ENCODE measurements at regions of chrX and their contacts with region 1.

Region 1: DNA sequence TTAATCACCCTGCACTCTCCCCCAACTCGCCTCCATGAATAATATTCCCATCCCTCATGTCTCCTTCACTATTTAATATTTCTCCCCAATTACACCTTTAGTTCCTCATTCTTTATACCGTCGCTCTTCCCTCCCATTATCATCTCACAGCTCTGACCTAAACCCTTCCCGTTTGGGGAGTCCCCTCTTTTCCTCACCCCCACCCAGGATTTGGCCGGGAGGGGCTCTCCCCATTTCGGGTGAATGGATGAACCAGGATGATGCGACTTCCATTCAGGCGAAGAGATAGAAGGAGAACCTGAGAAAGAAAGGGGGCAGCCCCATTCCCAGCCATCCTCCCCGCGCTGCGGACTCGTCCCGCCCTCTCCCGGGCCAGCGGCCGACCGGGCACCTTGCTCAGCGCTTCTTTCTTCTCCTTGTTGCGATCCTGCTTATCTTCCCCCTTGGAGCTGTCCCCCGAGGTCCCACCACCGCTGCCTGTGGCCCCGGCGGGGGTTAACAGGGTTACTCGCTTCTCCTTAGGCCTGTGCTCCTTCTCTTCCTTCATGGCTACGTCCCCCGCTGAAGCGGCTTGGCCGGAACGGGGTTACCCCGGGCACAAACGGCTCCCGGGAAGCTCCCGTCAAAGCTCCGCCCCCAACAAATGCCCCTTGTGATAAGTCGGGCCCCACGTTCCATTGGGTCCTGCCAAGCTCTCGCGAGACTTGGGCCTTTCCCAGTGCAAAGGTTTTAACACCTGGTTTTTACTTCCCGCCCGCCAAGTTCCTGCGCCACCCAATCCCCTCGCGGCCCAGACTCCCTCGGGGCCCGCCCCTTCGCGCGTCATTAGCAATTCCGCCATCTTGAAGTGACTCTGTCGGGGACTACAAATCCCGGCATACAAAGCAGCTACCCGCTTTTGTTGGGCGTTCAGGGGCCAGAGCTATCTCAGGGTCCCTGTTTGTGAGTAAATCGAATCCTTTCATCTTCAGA is at the start of gene UPF3B:
- DNase-seq: peak; percentile 92 to 98
- H3K4me3 ChIP-seq: peak within 1 kb of the TSS; percentile 57 to 70
- H3K27ac ChIP-seq: peak within 1 kb of the TSS; percentile 81 to 85
- H3K4me1 ChIP-seq: no peaks in the 10 kb centered on the region
- H3K27me3 ChIP-seq: no peaks in the 10 kb centered on the region
- CTCF ChIP-seq: no peak
- total RNA-seq, gene UPF3B: not detected

Region 2: GRCh38 chrX:118345401-118346257 is 1507.0 kb before region 1 on chrX and contains the start of gene WDR44:
- intact Hi-C with region 1: loop called (anchors 10 kb)
- DNase-seq: peak; percentile 77 to 96
- H3K4me3 ChIP-seq: peak within 1 kb of the TSS; percentile 69 to 89
- H3K27ac ChIP-seq: peak within 1 kb of the TSS; percentile 94 to 95
- H3K4me1 ChIP-seq: peaks cover 0 to 3% of the 10 kb centered on the region in 2 donors
- H3K27me3 ChIP-seq: no peaks in the 10 kb centered on the region
- CTCF ChIP-seq: no peak
- total RNA-seq, gene WDR44: 5.9 TPM

Region 3: DNA sequence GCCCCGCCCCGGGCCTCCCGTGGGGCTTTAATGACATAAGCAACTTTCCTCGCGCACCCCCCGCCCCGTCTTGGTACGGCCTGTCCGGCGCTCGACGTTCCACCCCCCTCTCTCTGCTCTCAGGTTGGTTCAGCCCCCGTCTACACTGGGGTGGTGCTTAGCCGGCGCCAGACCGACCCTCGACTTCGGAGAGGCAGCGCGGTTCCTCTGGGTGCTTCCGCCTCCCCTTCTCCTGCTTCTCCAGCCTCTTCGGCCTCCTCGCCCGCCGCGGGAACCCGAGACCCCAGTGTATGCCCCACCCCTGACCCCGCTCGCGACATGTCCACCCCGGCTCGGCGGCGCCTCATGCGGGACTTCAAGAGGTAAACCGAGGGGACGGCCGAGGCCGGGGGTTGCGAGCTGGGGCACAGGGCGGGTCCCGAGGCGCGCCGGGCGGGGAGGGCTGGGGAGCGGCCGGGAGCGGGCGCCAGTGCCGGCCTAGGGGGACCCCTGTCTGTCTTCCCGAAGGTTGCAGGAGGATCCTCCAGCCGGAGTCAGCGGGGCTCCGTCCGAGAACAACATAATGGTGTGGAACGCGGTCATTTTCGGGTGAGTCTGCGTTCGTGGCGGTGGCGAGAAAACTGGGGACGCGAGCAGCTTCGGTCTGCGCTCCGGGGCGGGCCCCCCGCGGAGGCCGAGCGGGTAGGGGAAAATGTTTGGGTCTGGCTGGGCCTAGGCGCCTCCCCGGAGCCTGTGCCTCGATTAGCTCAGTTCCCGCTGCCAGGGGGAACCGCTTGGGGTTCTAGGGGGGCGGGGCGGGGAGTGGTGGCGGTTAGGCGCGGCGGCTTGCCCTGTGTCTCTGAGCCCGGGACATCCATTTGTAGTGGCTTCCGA is 278.0 kb before region 1 on chrX and contains the start of gene UBE2A:
- intact Hi-C with region 1: loop called (anchors 5 kb)
- DNase-seq: peak; percentile 45 to 93
- H3K4me3 ChIP-seq: peak within 1 kb of the TSS; percentile 64 to 92
- H3K27ac ChIP-seq: peak within 1 kb of the TSS; percentile 94 to 95
- H3K4me1 ChIP-seq: peaks cover 0 to 5% of the 10 kb centered on the region in 2 donors
- H3K27me3 ChIP-seq: no peaks in the 10 kb centered on the region
- CTCF ChIP-seq: peak; percentile 7 to 50 (median 30)
- total RNA-seq, gene UBE2A: 28.4 TPM

Region 4: GRCh38 chrX:119606280-119607015 is 246.2 kb before region 1 on chrX and contains the start of gene NKRF:
- intact Hi-C with region 1: loop called (anchors 10 kb)
- DNase-seq: peak; percentile 68 to 95
- H3K4me3 ChIP-seq: peak within 1 kb of the TSS; percentile 63 to 77
- H3K27ac ChIP-seq: peak within 1 kb of the TSS; percentile 69 to 79
- H3K4me1 ChIP-seq: no peaks in the 10 kb centered on the region
- H3K27me3 ChIP-seq: no peaks in the 10 kb centered on the region
- CTCF ChIP-seq: no peak
- total RNA-seq, gene NKRF: 2.8 TPM

Region 5: DNA sequence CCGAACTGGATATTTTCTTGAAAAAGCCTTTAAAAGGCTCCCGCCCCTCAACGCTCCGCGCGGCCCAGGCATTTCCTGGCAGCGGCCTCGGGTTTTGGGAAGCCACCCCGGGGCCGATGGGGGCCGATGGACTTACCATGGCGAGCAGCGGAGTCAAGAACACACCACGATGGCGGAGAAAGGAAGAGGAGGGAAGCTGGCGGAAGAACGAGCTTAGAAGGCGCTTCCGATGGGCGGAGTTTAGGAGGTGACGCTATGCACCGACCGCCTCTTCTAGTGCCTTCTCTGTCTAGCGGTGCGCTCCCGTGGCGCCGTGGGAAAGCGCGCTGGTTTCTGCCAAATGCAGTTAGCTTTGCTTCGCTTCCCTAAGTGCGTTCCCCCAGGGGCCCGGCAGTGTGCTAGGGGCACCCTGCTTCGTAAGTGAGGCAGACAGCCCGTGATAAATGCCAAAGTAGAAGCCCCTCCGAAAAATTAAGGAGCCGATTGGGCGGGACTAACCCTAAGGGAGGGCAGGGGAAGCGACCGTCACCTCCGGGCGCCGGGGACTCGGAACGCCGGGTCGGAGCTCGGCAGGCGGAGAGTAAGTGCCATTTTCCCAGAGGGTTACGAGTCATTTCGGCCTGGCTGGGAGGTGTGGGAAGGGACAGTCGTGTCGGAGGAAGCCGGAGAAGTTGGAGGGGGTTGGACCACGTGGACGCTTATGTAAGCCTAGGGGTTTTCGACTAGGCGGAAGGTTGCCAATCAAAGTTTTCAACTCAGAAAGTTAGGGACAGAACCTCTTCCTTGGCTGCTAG is 61.0 kb before region 1 on chrX and contains the start of gene RPL39:
- intact Hi-C with region 1: loop called (anchors 2 kb)
- DNase-seq: peak; percentile 45 to 88
- H3K4me3 ChIP-seq: peak within 1 kb of the TSS; percentile 59 to 82
- H3K27ac ChIP-seq: peak within 1 kb of the TSS; percentile 88 to 95
- H3K4me1 ChIP-seq: peaks cover 2 to 13% of the 10 kb centered on the region in 2 donors
- H3K27me3 ChIP-seq: no peaks in the 10 kb centered on the region
- CTCF ChIP-seq: no peak
- total RNA-seq, gene RPL39: 2,929 TPM

Region 6: DNA sequence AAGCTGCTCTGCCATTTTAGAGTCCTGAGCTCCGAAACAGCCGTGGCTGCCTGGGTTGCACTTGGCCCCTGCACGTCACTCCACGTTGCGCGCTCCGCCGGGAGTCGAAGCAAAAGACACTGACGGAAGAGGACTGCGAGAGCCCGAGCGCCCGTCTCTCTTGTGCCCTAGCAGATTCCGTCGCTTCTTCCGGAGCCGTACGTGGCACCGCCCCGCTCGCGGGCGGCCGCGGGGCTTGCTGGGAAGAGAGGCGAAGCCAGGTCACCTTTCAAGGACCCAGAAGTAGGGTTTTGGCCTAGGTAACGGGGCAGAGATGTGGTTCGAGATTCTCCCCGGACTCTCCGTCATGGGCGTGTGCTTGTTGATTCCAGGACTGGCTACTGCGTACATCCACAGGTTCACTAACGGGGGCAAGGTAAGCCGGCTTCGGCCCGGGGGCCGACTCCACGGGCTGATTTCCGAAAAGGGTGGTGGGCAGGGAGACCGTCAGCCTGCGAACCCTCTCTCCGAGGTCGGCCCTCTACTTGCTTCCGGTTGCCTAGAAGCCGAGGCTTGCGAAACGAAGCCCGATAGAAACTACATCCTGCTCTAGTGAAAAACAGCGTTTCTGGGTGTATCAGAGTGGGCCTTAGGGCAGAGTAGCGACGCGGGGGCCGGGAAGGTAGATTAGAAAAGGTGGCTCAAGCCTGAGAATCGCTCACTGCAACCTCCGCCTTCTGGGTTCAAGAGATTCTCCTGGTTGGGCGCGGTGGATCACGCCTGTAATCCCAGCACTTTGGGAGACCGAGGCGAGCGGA is 19.1 kb after region 1 on chrX and contains the starts of genes NDUFA1 and RNF113A:
- intact Hi-C with region 1: loop called (anchors 1 kb)
- DNase-seq: peak; percentile 31 to 89
- H3K4me3 ChIP-seq: peak within 1 kb of the TSS; percentile 54 to 66
- H3K27ac ChIP-seq: peak within 1 kb of the TSS; percentile 90 to 93
- H3K4me1 ChIP-seq: peaks cover 0 to 5% of the 10 kb centered on the region in 2 donors
- H3K27me3 ChIP-seq: no peaks in the 10 kb centered on the region
- CTCF ChIP-seq: no peak
- total RNA-seq, gene NDUFA1: 24.5 TPM
- total RNA-seq, gene RNF113A: 8.8 TPM

Region 7: GRCh38 chrX:120250522-120251271 is 398.0 kb after region 1 on chrX and contains the start of gene ZBTB33:
- intact Hi-C with region 1: loop called (anchors 2 kb)
- DNase-seq: peak; percentile 66 to 95
- H3K4me3 ChIP-seq: peak within 1 kb of the TSS; percentile 57 to 63
- H3K27ac ChIP-seq: peak within 1 kb of the TSS; percentile 87 to 93
- H3K4me1 ChIP-seq: no peaks in the 10 kb centered on the region
- H3K27me3 ChIP-seq: no peaks in the 10 kb centered on the region
- CTCF ChIP-seq: peak; percentile 61 to 64 (median 62)
- total RNA-seq, gene ZBTB33: 3.6 TPM